ENCODE measurements at regions of chr1 and their contacts with region 1.

Region 1: GRCh38 chr1:234875953-234876855 is 252.4 kb downstream of the TOMM20 start:
- DNase-seq: peak in 1 of 5 donors; percentile 40
- H3K4me3 ChIP-seq: no peak overlapping the region
- H3K27ac ChIP-seq: no peak overlapping the region
- H3K4me1 ChIP-seq: peaks cover 1% of the 10 kb centered on the region
- H3K27me3 ChIP-seq: no peaks in the 10 kb centered on the region
- CTCF ChIP-seq: no peak
- EP300 ChIP-seq: no peak
- POLR2A ChIP-seq: no peak

Region 2: DNA sequence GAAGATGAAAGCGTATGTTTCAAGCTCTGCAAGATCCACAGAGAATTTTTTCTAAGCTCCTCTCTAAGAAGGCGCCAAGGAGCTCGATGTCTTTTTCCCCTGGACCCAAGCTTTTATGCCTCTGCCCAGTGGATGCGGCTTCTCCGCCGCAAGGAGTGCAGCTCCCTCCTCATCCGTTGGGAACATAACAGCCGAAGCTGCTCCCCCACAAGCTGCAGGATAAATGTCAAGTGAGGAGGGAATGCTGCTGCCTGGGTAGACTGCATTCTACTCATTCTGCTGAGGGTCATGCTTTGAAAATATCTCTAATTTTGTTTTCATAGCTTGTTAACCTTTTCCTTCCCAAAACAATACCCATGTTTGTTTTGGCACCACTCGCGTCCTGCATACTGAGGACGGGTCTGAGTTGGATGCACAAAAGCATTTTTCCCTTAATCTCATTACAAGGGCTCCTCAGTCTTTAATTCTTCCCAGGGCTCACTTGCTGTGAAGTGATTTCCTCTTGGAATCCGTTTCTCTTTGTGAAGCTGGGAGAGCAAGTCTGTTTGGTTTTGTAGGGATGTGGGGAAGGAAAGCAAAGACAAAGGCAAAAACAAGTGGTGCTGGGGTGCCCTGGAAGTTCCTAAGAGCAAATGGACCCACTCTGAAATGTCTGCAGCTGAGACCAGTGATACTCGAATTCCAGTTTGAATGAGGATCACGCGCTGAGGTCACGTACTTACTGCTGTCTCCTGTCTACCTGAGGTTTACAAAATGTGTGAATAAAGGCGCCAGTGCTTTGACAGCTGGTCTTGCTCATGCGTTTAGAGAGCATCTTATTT is 132.2 kb before region 1 on chr1:
- intact Hi-C with region 1: loop called in 1 of 4 experiments (anchors 10 kb)
- DNase-seq: peak in 4 of 5 donors; percentile 41 to 58 (median 52)
- H3K4me3 ChIP-seq: no peak overlapping the region
- H3K27ac ChIP-seq: peak overlapping the region in 1 of 2 donors; percentile 65
- H3K4me1 ChIP-seq: no peaks in the 10 kb centered on the region
- H3K27me3 ChIP-seq: no peaks in the 10 kb centered on the region
- CTCF ChIP-seq: no peak
- EP300 ChIP-seq: no peak
- POLR2A ChIP-seq: no peak

Region 3: GRCh38 chr1:234842726-234843641 is 33.2 kb before region 1 on chr1:
- intact Hi-C with region 1: no loop called
- DNase-seq: no peak
- H3K4me3 ChIP-seq: no peak overlapping the region
- H3K27ac ChIP-seq: no peak overlapping the region
- H3K4me1 ChIP-seq: no peaks in the 10 kb centered on the region
- H3K27me3 ChIP-seq: no peaks in the 10 kb centered on the region
- CTCF ChIP-seq: no peak
- EP300 ChIP-seq: no peak
- POLR2A ChIP-seq: no peak

Measured in ovary (tissue), 10 donors.